Right ventricle myocardium superior (tissue), 1 donor: ENCODE measurements at regions of chr2 and their contacts with region 1.

Region 1: DNA sequence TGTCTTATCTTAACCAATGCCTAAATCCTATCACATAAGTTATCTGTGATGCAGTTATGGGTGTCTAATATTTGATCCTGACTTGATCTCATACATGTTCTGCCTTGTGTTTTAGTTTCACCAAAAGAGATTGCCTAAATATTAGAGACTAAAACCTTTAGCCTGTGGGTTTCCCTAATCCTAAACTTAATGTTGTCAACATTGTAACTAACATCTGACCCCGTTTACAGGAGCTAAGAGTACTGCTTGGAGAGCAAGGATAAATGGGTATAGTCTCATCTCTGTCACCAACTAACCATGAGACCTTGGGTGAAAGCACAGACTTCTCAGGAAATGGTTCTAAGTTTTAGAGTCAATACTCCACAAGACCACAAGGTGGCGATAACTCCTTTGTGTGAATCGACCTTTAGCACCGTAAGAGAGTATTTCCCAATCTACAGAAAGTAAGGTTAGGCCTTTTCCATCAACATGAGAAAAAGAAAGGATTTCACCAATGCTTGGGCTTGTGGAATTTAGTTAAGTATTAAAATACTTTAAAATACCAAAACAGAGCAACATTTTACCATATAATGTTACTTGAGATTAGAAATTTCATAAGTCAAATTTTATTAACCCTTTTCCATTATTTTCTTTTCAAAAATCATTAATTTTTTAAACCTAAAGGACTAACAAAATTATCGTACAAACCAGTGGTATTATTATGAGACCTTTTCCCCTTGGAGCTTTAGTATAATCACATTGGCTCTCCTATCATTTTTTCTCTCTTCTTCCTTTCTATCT is 60.5 kb downstream of the G6PC2 start:
- DNase-seq: no peak
- ATAC-seq: peak; percentile 94

Region 2: DNA sequence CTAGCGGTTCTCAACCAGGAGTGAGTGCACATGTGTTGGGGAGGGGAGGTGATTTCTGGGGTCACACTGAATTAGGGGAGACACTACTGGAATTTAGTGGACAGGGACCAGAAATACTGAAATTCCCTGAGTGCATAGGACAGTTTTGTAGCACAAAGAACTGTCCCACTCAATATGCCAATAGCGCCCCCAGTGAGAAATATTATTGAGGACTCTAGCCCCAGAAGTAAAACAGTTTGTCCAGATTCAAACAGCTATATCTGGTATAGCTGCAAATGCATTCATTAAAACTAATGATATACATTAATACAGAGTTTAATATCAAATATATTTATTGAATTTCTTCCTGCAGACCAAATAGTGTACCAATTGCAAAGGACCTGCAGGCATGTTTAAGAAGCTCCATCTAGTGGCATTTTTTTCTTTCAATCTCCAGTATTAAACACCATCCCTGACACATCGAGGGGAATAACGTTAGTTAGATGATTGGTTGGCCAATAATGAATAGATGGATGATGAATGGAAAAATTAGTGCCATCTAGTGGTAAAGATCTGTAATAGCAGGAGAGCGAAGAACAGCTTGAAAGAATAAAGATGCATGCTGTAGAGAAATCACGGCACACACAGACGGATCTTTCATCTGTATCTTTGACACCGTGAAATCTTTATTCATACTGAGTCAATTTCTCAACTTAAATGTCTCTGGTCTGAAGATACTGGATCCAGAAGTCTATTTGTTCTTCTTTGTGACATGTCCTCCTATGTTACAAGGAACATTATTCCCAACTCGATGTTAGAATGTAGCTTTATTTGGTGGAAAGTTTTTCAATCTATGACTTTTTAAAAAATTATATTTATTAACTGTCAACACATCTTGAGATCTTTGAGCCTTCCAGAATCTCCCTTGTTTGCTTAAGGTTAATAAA is 170.2 kb after region 1 on chr2:
- intact Hi-C with region 1: loop called (anchors 5 kb)
- DNase-seq: no peak
- ATAC-seq: peak; percentile 53